OCI-LY7 (cell line): ENCODE measurements at regions of chr17 and their contacts with region 1.

Region 1: GRCh38 chr17:68346448-68346847 is 55.2 kb downstream of the ARSG start:
- DNase-seq: peak; percentile 99
- H3K4me3 ChIP-seq: peak overlapping the region; percentile 51
- H3K27ac ChIP-seq: peak overlapping the region; percentile 95
- H3K4me1 ChIP-seq: peaks cover 48% of the 10 kb centered on the region
- CTCF ChIP-seq: no peak; the same call in 1 of the 2 replicates

Region 2: GRCh38 chr17:68398691-68399637 is 52.5 kb after region 1 on chr17:
- CTCF ChIA-PET with region 1: interaction called, 7 read pairs
- POLR2A ChIA-PET with region 1: interaction called, 7 read pairs
- intact Hi-C with region 1: loop called (anchors 5 kb)
- DNase-seq: peak; percentile 92
- H3K4me3 ChIP-seq: no peak overlapping the region
- H3K27ac ChIP-seq: peak overlapping the region; percentile 8
- H3K4me1 ChIP-seq: peaks cover 30% of the 10 kb centered on the region
- CTCF ChIP-seq: peak; percentile 100

Region 3: DNA sequence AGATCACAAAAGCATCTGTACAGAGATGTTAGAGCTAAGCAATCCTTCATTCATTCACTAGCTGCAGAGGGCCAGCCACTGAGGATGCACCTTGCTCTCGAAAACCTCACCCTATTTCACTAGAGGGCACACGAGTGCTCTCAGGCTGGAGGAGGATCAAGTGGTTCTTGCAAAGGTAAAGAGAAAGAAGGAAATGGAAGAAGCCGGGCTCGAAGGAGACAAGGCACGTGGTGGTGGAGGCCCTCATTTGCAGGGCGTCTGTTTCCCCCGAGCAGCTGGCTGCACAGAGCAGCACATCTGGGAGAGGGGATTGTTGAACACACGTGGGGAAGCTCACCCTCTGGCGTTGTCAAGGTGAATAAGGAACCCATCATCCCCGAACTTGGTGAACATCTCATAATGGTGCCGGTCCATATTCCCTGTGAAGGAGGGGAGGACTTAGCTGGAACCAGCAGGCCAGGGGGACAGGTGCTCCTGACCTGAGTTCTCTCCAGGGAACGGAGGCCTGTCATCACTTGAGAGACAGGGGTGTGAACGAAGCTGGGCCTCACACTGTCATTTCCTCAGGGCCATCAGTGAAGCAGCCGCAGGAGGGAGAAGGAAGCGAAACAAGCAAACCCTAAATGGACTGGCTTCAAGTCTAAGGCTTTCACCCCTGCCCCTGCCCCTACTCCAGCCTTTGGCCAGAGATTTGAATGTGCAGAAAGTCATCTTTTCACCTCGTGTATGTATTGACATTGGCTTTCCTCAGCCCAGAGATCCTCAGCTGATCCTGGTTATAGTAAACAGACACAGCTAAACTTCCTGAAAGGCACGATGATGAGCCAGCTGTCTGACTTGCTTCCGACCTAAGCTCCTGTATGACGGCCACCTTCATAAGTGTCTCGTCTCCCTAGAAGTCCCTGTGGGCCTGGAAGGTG is 193.4 kb after region 1 on chr17:
- CTCF ChIA-PET with region 1: no interaction called
- POLR2A ChIA-PET with region 1: no interaction called
- intact Hi-C with region 1: no loop called
- DNase-seq: peak; percentile 81
- H3K4me3 ChIP-seq: no peak overlapping the region
- H3K27ac ChIP-seq: peak overlapping the region; percentile 33
- H3K4me1 ChIP-seq: peaks cover 18% of the 10 kb centered on the region
- CTCF ChIP-seq: peak; percentile 86